ENCODE measurements at regions of chr4 and their contacts with region 1.

Region 1: DNA sequence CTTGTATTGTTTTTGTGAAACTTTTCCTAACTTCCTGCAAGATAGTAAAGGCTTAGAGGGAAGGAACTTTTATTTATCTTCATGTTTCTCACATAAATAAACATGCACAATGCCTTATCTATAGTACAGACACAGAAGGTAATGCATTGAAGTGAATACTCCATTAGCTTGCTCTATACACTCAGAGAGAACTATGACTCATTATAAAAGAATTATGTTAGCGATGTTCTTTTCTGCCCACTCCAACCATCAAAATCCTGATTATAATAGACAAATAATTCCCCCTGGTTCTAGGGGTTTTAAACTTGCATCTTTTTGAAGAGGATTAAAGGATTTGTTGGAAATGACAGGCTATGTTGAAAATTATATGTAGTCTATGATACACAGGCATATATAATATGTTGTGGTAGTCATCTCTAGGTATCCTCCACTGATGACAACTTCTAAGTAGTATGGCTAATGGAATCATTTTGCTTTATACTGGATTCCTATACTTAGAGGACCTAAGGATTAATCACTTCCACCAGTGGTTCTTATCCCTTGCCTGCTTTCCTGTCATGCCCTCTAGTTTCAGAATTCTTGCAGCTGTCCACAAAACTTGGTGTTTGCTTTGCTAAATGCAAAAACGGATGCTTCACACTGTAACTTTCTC is 115.7 kb downstream of the NDST4 start:
- DNase-seq: no peak
- H3K4me3 ChIP-seq: no peak overlapping the region
- H3K27ac ChIP-seq: no peak overlapping the region
- H3K4me1 ChIP-seq: no peaks in the 10 kb centered on the region
- H3K27me3 ChIP-seq: no peaks in the 10 kb centered on the region
- CTCF ChIP-seq: no peak
- POLR2A ChIP-seq: no peak

Region 2: DNA sequence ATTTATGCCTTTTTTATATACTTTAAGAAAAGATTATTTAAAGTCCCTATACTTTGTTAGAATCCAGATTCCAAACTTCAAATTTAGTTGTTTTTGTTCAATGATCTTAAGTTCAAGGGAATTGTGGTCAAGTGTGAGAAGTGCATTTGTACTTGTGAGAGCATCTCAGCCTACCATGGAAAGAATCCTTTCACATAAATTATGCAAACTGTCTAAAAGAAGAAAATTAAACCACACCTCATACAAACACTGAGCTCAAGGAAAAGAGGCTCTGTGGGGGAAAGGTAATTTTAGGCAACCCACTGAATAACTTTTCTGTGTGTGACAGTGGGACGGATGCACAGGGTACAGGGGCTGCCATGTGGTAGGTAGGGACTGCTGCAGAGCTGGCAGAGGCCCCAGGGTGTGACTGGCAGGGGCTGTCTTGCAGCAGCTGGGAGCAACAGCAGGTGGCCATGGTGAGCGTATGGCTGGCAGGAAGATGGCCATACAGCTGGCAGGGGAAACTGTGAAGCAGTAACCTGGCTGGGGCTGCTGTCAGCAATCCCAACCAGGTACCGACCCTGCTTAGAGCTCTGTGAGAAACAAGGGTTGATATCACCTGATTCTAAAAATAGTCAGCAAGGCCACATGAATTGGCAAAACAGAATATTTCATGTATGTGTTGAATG is 268.5 kb before region 1 on chr4:
- intact Hi-C with region 1: loop called (anchors 5 kb)
- DNase-seq: no peak
- H3K4me3 ChIP-seq: no peak overlapping the region
- H3K27ac ChIP-seq: no peak overlapping the region
- H3K4me1 ChIP-seq: no peaks in the 10 kb centered on the region
- H3K27me3 ChIP-seq: no peaks in the 10 kb centered on the region
- CTCF ChIP-seq: no peak
- POLR2A ChIP-seq: no peak

Measured in breast epithelium (tissue), 4 donors.